GM13977 (cell line): ENCODE measurements at regions of chr14 and their contacts with region 1.

Region 1: DNA sequence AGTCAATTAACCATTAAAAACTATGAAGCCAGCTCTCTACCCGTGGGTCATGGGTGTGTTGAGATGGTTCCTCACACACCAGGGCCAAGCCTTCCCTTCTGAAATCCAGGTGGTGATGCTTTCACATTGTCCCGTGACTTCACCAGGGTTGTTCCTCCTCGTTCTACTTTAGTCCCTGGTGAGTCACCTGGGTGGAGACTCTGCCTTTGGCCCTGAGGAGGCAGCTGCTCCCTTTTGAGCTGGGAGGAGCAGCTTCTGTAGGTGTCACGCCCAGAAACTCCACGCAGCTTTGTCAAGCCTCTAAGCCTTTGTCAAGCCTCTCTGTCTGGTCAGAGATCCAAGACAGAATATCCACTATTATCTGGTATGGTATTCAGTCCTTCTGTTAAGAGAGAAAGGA is 348.2 kb downstream of the BMP4 start:
- DNase-seq: no peak
- CTCF ChIP-seq: no peak

Region 2: DNA sequence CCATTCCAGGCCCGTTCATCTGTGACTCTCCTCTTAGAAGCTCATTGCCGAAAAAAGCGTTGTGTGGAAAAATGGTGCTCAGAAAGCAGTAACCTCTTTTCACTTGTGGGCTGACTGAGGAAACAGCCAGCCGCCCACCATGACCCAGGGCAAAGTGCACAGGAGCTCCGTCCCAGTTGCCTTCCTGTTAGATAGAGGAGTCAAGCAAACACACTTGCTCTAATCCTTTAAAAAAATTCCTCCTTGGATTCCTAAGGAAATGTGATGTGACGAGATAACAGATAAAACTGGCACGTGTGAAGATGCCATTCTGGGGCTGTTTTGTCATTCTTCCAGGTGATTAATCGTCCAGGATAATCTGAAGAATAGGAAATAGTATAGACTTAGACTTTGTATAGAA is 58.4 kb before region 1 on chr14:
- in situ Hi-C with region 1: loop called (anchors 10 kb)
- DNase-seq: no peak
- CTCF ChIP-seq: no peak